Activated naive CD4-positive, alpha-beta T cell treated with anti-CD3 and anti-CD28 coated beads, Interleukin-2, amount 10 ng/mL, durations not matched to agents 7 days and 5 days (primary cell): ENCODE measurements at regions of chr12 and their contacts with region 1.

Region 1: DNA sequence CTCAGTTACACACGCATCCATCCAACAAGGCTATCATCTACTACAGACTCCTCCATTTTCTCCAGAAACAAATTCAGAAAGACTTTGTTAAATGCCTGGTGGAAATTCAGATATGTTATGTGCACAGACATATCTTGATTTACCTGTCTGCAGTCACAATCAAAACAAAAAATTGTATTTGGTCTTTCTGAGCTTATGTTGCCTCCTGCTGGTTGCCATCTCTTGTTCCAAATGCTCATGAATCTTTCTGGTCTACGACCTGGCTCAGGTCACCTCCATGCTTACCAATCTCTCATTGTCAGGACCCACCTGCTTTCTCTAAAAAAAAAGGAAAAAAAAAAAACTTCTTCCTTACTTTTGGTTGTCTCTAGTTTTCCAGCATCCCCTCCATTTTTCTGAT is 169.2 kb upstream of the PLXNC1 start:
- DNase-seq: peak; percentile 62
- H3K4me3 Mint-ChIP-seq: no peak overlapping the region
- H3K27ac Mint-ChIP-seq: no peak overlapping the region
- H3K4me1 Mint-ChIP-seq: peaks cover 47% of the 10 kb centered on the region
- H3K27me3 Mint-ChIP-seq: peaks cover 19% of the 10 kb centered on the region

Region 2: DNA sequence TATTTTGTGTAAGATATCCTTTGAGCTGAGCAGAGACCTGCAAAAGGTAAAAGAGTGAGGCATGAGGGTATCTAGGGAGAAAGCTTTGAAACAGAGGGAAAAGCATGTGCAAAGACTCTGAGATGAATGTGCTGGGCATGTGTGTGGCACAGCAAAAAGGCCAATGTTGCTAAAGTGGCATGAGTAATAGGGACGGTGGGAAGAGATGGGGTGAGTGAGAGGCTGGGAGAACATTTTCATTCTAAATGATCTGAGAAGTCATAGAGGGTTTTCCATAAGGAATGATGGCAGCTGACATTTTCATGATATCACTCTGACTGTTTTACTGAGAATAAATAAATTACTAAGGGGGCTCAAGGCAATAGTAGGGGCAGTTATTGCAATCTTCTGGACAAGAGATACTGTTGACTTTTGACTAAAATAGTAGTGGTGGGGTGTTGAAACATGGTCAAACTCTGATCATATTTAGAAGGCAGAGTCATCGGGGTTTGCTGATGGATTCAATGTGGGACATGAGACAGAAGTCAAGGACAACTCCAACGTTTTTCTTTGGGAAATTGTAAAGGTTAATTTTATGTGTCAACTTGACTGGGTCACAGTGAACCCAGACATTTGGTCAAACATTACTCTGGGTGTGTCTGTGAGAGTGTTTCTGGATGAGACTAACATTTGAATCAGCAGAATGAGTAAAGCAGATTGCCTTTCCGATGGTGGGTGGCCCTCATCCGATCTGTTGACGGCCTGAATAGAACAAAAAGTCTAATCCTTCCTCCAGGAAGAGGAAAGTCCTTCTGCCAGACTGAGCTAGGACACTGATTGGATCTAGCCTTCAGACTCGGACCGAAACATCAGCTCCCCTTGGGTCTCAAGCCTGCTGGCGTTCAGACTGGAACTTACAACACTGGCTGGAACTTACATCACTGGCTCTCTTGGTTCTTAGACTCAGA is 24.8 kb before region 1 on chr12:
- CTCF ChIA-PET with region 1: no interaction called
- DNase-seq: no peak
- H3K4me3 Mint-ChIP-seq: no peak overlapping the region
- H3K27ac Mint-ChIP-seq: no peak overlapping the region
- H3K4me1 Mint-ChIP-seq: peaks cover 13% of the 10 kb centered on the region
- H3K27me3 Mint-ChIP-seq: no peaks in the 10 kb centered on the region

Region 3: GRCh38 chr12:94074980-94075928 is 96.1 kb after region 1 on chr12:
- CTCF ChIA-PET with region 1: interaction called, 12 read pairs
- DNase-seq: peak; percentile 30
- H3K4me3 Mint-ChIP-seq: no peak overlapping the region
- H3K27ac Mint-ChIP-seq: no peak overlapping the region
- H3K4me1 Mint-ChIP-seq: peaks cover 34% of the 10 kb centered on the region
- H3K27me3 Mint-ChIP-seq: peaks cover 12% of the 10 kb centered on the region